B cell (primary cell): ENCODE measurements at regions of chr3 and their contacts with region 1.

Region 1: DNA sequence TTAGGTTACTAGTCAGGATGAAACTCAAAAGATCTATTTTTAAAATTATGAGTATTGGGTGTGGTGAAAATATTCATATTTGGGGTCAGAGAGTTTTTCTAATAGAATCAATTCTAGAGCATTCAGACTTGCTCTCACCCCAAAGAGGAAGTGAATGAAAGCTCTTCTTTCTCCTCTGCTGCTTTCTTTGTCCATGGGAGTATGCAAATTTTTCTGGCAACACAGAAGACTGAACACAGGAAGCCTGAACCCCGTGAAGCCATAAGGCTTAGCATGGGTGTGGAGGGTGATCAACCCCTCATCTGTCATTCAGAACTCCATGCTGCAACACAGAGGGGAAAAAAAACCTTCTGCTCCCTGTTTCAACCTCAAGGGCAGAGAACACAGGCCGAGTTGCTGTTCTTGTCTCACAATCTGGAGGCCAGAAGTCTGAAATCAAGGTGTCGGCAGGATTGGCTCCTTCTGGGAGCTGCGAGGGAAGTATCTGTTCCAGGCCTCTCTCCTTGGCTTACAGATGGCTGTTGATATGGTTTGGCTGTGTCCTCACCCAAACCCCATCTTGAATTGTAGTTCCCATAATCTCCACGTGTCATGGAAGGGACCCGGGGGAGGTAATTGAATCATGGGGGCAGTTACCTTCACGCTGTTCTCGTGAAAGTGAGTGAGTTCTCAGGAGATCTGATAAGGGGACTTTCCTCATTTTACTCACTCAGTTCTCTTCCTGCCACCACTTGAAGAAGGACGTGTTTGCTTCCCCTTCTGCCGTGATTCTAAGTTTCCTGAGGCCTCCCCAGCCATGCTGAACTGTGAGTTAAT is 33.7 kb upstream of the CD47 start:
- DNase-seq: peak; percentile 94
- ATAC-seq: peak; percentile 64
- H3K4me3 ChIP-seq: peak overlapping the region; percentile 61 to 94 (median 83)
- H3K4me3 Mint-ChIP-seq: peak overlapping the region; percentile 92
- H3K27ac ChIP-seq: peak overlapping the region; percentile 97 to 99
- H3K27ac Mint-ChIP-seq: peak overlapping the region; percentile 95
- H3K4me1 ChIP-seq: peaks cover 78 to 82% of the 10 kb centered on the region in 2 donors
- H3K4me1 Mint-ChIP-seq: peaks cover 77% of the 10 kb centered on the region
- H3K27me3 ChIP-seq: no peaks in the 10 kb centered on the region
- H3K27me3 Mint-ChIP-seq: no peaks in the 10 kb centered on the region
- CTCF ChIP-seq: no peak

Region 2: GRCh38 chr3:107522510-107523288 is 601.8 kb before region 1 on chr3 and contains the start of gene BBX:
- CTCF ChIA-PET with region 1: no interaction called
- POLR2A ChIA-PET with region 1: no interaction called
- intact Hi-C with region 1: loop called (anchors 5 kb)
- DNase-seq: peak; percentile 97
- ATAC-seq: peak; percentile 84
- H3K4me3 ChIP-seq: peak within 1 kb of the TSS; percentile 74 to 96 (median 92)
- H3K4me3 Mint-ChIP-seq: peak within 1 kb of the TSS; percentile 98
- H3K27ac ChIP-seq: peak within 1 kb of the TSS; percentile 81 to 92
- H3K27ac Mint-ChIP-seq: peak within 1 kb of the TSS; percentile 99
- H3K4me1 ChIP-seq: peaks cover 24 to 27% of the 10 kb centered on the region in 2 donors
- H3K4me1 Mint-ChIP-seq: peaks cover 34% of the 10 kb centered on the region
- H3K27me3 ChIP-seq: no peaks in the 10 kb centered on the region
- H3K27me3 Mint-ChIP-seq: no peaks in the 10 kb centered on the region
- CTCF ChIP-seq: no peak
- total RNA-seq, gene BBX: 131 and 133 TPM in 2 replicates

Region 3: GRCh38 chr3:108062051-108062450 is 62.5 kb before region 1 on chr3:
- CTCF ChIA-PET with region 1: no interaction called
- POLR2A ChIA-PET with region 1: no interaction called
- intact Hi-C with region 1: loop called (anchors 2 kb)
- DNase-seq: peak; percentile 64
- ATAC-seq: peak; percentile 86
- H3K4me3 ChIP-seq: no peak overlapping the region
- H3K4me3 Mint-ChIP-seq: peak overlapping the region; percentile 42
- H3K27ac ChIP-seq: peak overlapping the region in 1 of 2 donors; percentile 63
- H3K27ac Mint-ChIP-seq: peak overlapping the region; percentile 1
- H3K4me1 ChIP-seq: peaks cover 13 to 30% of the 10 kb centered on the region in 2 donors
- H3K4me1 Mint-ChIP-seq: peaks cover 64% of the 10 kb centered on the region
- H3K27me3 ChIP-seq: no peaks in the 10 kb centered on the region
- H3K27me3 Mint-ChIP-seq: no peaks in the 10 kb centered on the region
- CTCF ChIP-seq: no peak

Region 4: GRCh38 chr3:108090701-108091451 is 33.7 kb before region 1 on chr3 and contains the start of gene CD47:
- CTCF ChIA-PET with region 1: interaction called, 16 read pairs
- POLR2A ChIA-PET with region 1: interaction called, 40 read pairs
- intact Hi-C with region 1: loop called (anchors 1 kb)
- DNase-seq: peak; percentile 96
- ATAC-seq: peak; percentile 76
- H3K4me3 ChIP-seq: peak within 1 kb of the TSS; percentile 76 to 98 (median 96)
- H3K4me3 Mint-ChIP-seq: peak within 1 kb of the TSS; percentile 99
- H3K27ac ChIP-seq: peak within 1 kb of the TSS; percentile 89 to 97
- H3K27ac Mint-ChIP-seq: peak within 1 kb of the TSS; percentile 99
- H3K4me1 ChIP-seq: peaks cover 35 to 40% of the 10 kb centered on the region in 2 donors
- H3K4me1 Mint-ChIP-seq: peaks cover 25% of the 10 kb centered on the region
- H3K27me3 ChIP-seq: no peaks in the 10 kb centered on the region
- H3K27me3 Mint-ChIP-seq: no peaks in the 10 kb centered on the region
- CTCF ChIP-seq: no peak
- total RNA-seq, gene CD47: 259 and 260 TPM in 2 replicates

Region 5: GRCh38 chr3:108100906-108101660 is 23.5 kb before region 1 on chr3:
- CTCF ChIA-PET with region 1: interaction called, 8 read pairs
- POLR2A ChIA-PET with region 1: interaction called, 21 read pairs
- intact Hi-C with region 1: loop called (anchors 1 kb)
- DNase-seq: peak; percentile 85
- ATAC-seq: peak; percentile 83
- H3K4me3 ChIP-seq: no peak overlapping the region
- H3K4me3 Mint-ChIP-seq: peak overlapping the region; percentile 44
- H3K27ac ChIP-seq: peak overlapping the region; percentile 56 to 89
- H3K27ac Mint-ChIP-seq: peak overlapping the region; percentile 88
- H3K4me1 ChIP-seq: peaks cover 48% of the 10 kb centered on the region in 2 donors
- H3K4me1 Mint-ChIP-seq: peaks cover 58% of the 10 kb centered on the region
- H3K27me3 ChIP-seq: no peaks in the 10 kb centered on the region
- H3K27me3 Mint-ChIP-seq: no peaks in the 10 kb centered on the region
- CTCF ChIP-seq: no peak

Region 6: DNA sequence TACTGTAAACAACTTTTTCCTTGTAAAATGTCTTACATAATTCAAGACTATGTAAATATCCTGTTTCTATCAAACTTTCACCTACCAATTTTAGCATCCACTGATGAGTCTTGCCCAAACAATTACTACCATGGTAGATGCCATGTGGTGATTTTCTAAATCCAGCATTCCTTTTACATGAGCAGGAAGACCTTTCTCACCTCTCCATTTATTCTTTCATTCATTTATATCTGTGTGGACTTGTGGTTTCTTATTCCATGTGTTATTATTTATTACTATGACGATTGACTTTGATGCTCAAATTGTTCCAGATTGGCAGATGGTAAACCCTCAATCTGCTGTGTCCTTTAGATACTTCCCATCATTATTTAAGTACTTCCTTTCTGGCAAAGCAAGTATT is 35.3 kb after region 1 on chr3:
- CTCF ChIA-PET with region 1: interaction called, 3 read pairs
- POLR2A ChIA-PET with region 1: no interaction called
- intact Hi-C with region 1: loop called (anchors 5 kb)
- DNase-seq: no peak
- ATAC-seq: no peak
- H3K4me3 ChIP-seq: no peak overlapping the region
- H3K4me3 Mint-ChIP-seq: no peak overlapping the region
- H3K27ac ChIP-seq: no peak overlapping the region
- H3K27ac Mint-ChIP-seq: peak overlapping the region; percentile 43
- H3K4me1 ChIP-seq: peaks cover 3 to 10% of the 10 kb centered on the region in 2 donors
- H3K4me1 Mint-ChIP-seq: peaks cover 38% of the 10 kb centered on the region
- H3K27me3 ChIP-seq: no peaks in the 10 kb centered on the region
- H3K27me3 Mint-ChIP-seq: no peaks in the 10 kb centered on the region
- CTCF ChIP-seq: no peak

Region 7: DNA sequence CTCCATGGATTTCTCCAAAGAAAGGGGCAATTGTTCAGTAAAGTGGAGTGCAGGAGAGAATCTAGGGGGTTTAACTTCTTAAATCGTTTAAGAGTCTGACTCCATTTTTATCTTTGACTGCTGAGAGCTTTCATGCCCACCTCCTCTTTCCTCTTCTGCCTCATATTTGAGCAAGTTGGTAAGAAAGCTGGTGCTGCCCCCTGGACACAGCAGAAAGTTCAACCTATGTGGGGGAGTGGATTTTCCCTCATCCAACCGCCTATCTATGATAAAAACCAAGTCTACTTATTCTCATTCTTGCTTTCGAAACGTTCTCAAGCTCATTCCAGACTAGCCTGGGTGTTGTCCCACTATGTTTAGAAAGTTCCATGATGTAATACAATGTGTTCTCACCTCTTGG is 197.8 kb after region 1 on chr3:
- CTCF ChIA-PET with region 1: interaction called, 5 read pairs
- POLR2A ChIA-PET with region 1: interaction called, 3 read pairs
- intact Hi-C with region 1: loop called (anchors 5 kb)
- DNase-seq: peak; percentile 55
- ATAC-seq: peak; percentile 73
- H3K4me3 ChIP-seq: no peak overlapping the region
- H3K4me3 Mint-ChIP-seq: no peak overlapping the region
- H3K27ac ChIP-seq: no peak overlapping the region
- H3K27ac Mint-ChIP-seq: no peak overlapping the region
- H3K4me1 ChIP-seq: no peaks in the 10 kb centered on the region
- H3K4me1 Mint-ChIP-seq: peaks cover 12% of the 10 kb centered on the region
- H3K27me3 ChIP-seq: no peaks in the 10 kb centered on the region
- H3K27me3 Mint-ChIP-seq: no peaks in the 10 kb centered on the region
- CTCF ChIP-seq: peak; percentile 52